T-cell (primary cell): ENCODE measurements at regions of chr9 and their contacts with region 1.

Region 1: GRCh38 chr9:87857141-87857947 is 25.3 kb upstream of the SPATA31E1 start:
- DNase-seq: no peak
- ATAC-seq: no peak
- H3K4me3 ChIP-seq: no peak overlapping the region
- H3K4me3 Mint-ChIP-seq: no peak overlapping the region
- H3K27ac ChIP-seq: no peak overlapping the region
- H3K27ac Mint-ChIP-seq: no peak overlapping the region
- H3K4me1 ChIP-seq: no peaks in the 10 kb centered on the region
- H3K4me1 Mint-ChIP-seq: no peaks in the 10 kb centered on the region
- H3K27me3 ChIP-seq: peaks cover 0 to 11% of the 10 kb centered on the region in 2 experiments
- H3K27me3 Mint-ChIP-seq: peaks cover 8% of the 10 kb centered on the region in 2 donors

Region 2: GRCh38 chr9:87656485-87656884 is 200.9 kb before region 1 on chr9:
- CTCF ChIA-PET with region 1: no interaction called
- POLR2A ChIA-PET with region 1: no interaction called
- DNase-seq: no peak
- ATAC-seq: no peak
- H3K4me3 ChIP-seq: no peak overlapping the region
- H3K4me3 Mint-ChIP-seq: no peak overlapping the region
- H3K27ac ChIP-seq: no peak overlapping the region
- H3K27ac Mint-ChIP-seq: no peak overlapping the region
- H3K4me1 ChIP-seq: no peaks in the 10 kb centered on the region
- H3K4me1 Mint-ChIP-seq: no peaks in the 10 kb centered on the region
- H3K27me3 ChIP-seq: no peaks in the 10 kb centered on the region
- H3K27me3 Mint-ChIP-seq: peaks cover 5 to 8% of the 10 kb centered on the region in 2 donors

Region 3: GRCh38 chr9:87867391-87867790 is 10.0 kb after region 1 on chr9:
- CTCF ChIA-PET with region 1: no interaction called
- POLR2A ChIA-PET with region 1: no interaction called
- DNase-seq: no peak
- ATAC-seq: no peak
- H3K4me3 ChIP-seq: no peak overlapping the region
- H3K4me3 Mint-ChIP-seq: no peak overlapping the region
- H3K27ac ChIP-seq: no peak overlapping the region
- H3K27ac Mint-ChIP-seq: no peak overlapping the region
- H3K4me1 ChIP-seq: no peaks in the 10 kb centered on the region
- H3K4me1 Mint-ChIP-seq: no peaks in the 10 kb centered on the region
- H3K27me3 ChIP-seq: peaks cover 0 to 14% of the 10 kb centered on the region in 2 experiments
- H3K27me3 Mint-ChIP-seq: no peaks in the 10 kb centered on the region

Region 4: DNA sequence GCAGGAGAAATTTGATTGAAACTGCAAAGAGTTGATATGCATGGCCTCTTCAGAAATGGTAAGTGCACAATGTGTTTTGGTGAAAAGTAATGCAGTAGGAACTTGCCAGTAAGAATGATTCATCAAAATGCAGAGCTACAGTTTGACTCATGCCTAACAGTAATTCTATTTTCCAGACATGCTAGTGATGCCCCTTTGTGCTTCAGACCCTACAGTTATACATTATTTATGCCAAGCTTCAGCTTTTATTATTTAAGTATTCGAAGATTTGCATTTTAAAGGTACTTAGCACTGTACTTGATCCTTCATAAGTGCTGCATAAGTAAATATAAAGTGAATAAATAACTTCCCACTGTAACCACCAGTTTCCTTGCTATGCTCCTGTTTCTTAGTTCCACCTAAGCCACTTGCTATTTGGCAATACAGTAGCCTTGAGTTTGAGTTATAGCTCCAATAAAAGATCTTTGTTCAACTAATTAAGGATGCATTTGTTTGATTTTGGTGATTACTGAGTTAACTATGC is 21.7 kb after region 1 on chr9:
- CTCF ChIA-PET with region 1: no interaction called
- POLR2A ChIA-PET with region 1: no interaction called
- DNase-seq: no peak
- ATAC-seq: no peak
- H3K4me3 ChIP-seq: no peak overlapping the region
- H3K4me3 Mint-ChIP-seq: no peak overlapping the region
- H3K27ac ChIP-seq: no peak overlapping the region
- H3K27ac Mint-ChIP-seq: no peak overlapping the region
- H3K4me1 ChIP-seq: peaks cover 0 to 10% of the 10 kb centered on the region in 2 experiments
- H3K4me1 Mint-ChIP-seq: no peaks in the 10 kb centered on the region
- H3K27me3 ChIP-seq: peaks cover 0 to 19% of the 10 kb centered on the region in 2 experiments
- H3K27me3 Mint-ChIP-seq: peaks cover 8 to 9% of the 10 kb centered on the region in 2 donors

Region 5: GRCh38 chr9:88011005-88011766 is 153.8 kb after region 1 on chr9:
- CTCF ChIA-PET with region 1: no interaction called
- POLR2A ChIA-PET with region 1: no interaction called
- DNase-seq: no peak
- ATAC-seq: no peak
- H3K4me3 ChIP-seq: no peak overlapping the region
- H3K4me3 Mint-ChIP-seq: no peak overlapping the region
- H3K27ac ChIP-seq: no peak overlapping the region
- H3K27ac Mint-ChIP-seq: no peak overlapping the region
- H3K4me1 ChIP-seq: peaks cover 2 to 14% of the 10 kb centered on the region in 2 experiments
- H3K4me1 Mint-ChIP-seq: peaks cover 6 to 8% (median 6%) of the 10 kb centered on the region in 3 donors
- H3K27me3 ChIP-seq: peaks cover 0 to 16% of the 10 kb centered on the region in 2 experiments
- H3K27me3 Mint-ChIP-seq: peaks cover 0 to 6% of the 10 kb centered on the region in 2 donors

Region 6: GRCh38 chr9:88355166-88355565 is 497.8 kb after region 1 on chr9:
- CTCF ChIA-PET with region 1: no interaction called
- POLR2A ChIA-PET with region 1: interaction called in 1 of 2 experiments, 11 read pairs
- DNase-seq: no peak
- ATAC-seq: peak in 1 of 4 experiments; percentile 61
- H3K4me3 ChIP-seq: no peak overlapping the region
- H3K4me3 Mint-ChIP-seq: no peak overlapping the region
- H3K27ac ChIP-seq: no peak overlapping the region
- H3K27ac Mint-ChIP-seq: no peak overlapping the region
- H3K4me1 ChIP-seq: no peaks in the 10 kb centered on the region
- H3K4me1 Mint-ChIP-seq: peaks cover 0 to 3% (median 0%) of the 10 kb centered on the region in 3 donors
- H3K27me3 ChIP-seq: no peaks in the 10 kb centered on the region
- H3K27me3 Mint-ChIP-seq: no peaks in the 10 kb centered on the region